Mammary epithelial cell (primary cell): ENCODE measurements at regions of chr9 and their contacts with region 1.

Region 1: DNA sequence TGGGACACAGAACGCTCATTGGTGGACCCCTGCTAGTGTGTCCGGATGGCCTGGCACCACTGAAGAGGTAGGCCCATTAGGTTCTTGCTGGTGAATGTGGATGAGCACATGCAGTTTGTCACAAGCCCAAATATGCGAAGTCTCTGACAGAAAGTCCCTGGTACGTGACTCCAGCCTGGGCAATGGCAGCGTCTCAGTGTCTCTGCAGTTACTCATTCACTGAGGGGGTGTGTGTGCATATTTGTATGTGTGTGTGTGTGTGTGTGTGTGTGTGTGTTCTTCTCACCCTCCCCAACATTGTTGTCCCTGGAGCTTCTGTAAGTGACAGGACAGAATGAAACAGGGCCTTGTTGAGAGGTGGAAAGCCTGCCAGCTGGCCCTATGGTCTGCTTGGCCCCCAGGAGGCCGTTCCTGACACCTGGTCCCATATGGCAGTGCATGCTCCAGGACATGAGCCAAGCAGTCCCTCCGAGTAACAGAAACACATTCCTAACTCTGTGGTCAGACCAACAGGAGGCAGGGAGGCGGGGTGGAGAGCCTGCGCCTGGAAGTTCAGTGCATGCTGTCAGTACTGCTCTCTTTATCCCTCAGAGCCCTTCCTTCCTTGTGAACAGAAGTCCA is 169.9 kb downstream of the SLC28A3 start:
- DNase-seq: peak; percentile 48
- H3K4me3 ChIP-seq: no peak overlapping the region
- H3K27ac ChIP-seq: peak overlapping the region; percentile 54
- H3K4me1 ChIP-seq: peaks cover 15% of the 10 kb centered on the region
- H3K27me3 ChIP-seq: no peaks in the 10 kb centered on the region
- CTCF ChIP-seq: no peak

Region 2: DNA sequence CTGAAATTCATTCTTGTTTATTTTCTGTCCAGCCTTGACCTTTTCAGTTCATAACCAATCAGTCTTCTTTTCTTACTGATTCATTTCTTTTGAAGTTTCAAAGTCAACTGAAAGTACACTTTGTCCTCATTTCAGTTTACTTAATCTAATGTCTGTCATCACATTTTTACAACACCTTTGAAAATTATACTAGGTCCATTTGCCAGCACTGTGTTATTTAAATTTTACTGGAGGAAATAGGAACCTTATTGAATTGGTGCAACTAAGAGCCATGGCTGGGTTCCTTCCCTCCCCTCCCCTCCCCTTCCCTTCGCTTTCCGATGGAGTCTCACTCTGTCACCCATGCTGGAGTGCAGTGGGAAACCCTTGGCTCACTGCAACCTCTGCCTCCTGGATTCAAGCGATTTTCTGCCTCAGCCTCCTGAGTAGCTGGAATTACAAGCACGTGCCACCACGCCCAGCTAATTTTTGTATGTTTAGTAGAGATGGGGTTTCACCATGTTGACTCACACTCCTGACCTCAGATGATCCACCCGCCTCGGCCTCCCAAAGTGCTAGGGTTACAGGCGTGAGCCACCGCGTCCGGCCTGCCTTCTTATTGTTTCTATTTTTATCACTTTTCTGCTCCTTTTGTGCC is 183.7 kb before region 1 on chr9:
- CTCF ChIA-PET with region 1: interaction called, 12 read pairs
- dilution Hi-C with region 1: no loop called
- in situ Hi-C with region 1: no loop called
- intact Hi-C with region 1: no loop called
- DNase-seq: no peak
- H3K4me3 ChIP-seq: no peak overlapping the region
- H3K27ac ChIP-seq: no peak overlapping the region
- H3K4me1 ChIP-seq: no peaks in the 10 kb centered on the region
- H3K27me3 ChIP-seq: no peaks in the 10 kb centered on the region
- CTCF ChIP-seq: no peak

Region 3: DNA sequence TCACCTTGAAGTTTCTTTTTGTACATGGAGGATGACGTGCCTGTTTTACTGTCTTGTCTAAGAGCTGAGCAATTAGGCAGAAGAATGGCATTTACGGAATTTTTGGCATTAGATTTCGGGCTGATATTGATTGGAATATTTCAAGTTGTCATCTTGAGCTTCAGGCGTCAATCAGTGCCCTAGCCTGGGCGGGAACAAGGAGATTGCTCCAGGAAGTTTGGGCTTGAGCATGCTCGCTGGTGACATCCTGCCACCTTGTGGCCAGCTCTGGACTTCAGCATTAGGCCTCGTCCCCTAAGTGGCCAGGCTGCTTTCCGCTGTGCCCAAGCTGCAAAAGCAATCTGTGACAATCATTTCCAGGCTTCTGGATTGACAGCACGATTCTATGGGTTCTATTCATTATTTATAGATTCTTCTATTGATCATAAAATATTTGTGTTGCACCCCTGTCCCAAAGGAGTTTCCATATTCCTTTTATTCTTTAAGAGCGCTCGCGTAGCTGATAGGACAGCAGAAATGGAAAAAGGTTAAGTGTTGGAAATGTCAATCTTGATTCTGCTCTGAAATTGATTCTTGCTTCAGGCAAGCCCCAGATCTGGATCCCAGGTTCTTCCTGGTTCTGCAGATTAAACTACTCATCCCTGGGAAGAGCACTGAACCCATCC is 90.6 kb after region 1 on chr9:
- CTCF ChIA-PET with region 1: no interaction called
- dilution Hi-C with region 1: no loop called
- in situ Hi-C with region 1: no loop called
- intact Hi-C with region 1: loop called (anchors 2 kb)
- DNase-seq: peak; percentile 55
- H3K4me3 ChIP-seq: no peak overlapping the region
- H3K27ac ChIP-seq: no peak overlapping the region
- H3K4me1 ChIP-seq: no peaks in the 10 kb centered on the region
- H3K27me3 ChIP-seq: no peaks in the 10 kb centered on the region
- CTCF ChIP-seq: peak; percentile 95 to 96